GM12878 (cell line): ENCODE measurements at regions of chr16 and their contacts with region 1.

Region 1: DNA sequence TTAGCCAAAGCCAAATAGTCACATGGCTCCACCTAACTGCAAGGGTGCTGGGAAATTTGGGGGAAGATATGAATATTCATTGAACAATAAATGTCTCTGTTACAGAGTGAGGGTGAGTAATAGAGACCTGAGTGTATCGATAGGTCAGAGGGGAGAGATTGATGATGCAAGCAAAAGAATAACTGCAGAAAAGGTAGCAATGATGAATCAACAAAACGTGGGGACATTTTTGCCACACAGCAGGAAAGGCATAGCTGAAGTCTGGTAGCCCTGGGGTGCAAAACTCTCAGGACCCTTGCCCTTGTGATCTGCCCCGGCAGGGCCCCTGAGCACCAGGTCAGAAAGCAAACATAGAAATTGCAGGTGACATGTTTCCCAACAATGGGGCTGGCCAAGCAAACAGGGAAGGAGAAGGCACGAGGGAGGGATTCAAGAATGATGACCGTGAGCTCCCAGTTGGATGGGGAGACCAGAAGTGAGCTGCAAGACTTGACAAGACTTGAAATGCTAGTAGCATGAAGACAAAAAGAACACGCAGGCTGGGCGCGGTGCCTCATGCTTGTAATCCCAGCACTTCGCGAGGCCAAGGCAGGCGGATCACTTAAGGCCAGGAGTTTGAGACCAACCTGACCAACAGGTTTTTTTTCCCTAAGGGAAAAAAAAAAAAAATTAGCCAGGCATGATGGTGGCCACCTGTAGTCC is 12.7 kb upstream of the HERPUD1 start:
- DNase-seq: no peak
- ATAC-seq: no peak
- H3K4me3 ChIP-seq: no peak overlapping the region
- H3K27ac ChIP-seq: no peak overlapping the region
- H3K4me1 ChIP-seq: peaks cover 31% of the 10 kb centered on the region
- H3K27me3 ChIP-seq: no peaks in the 10 kb centered on the region
- CTCF ChIP-seq: no peak
- EP300 ChIP-seq: no peak
- POLR2A ChIP-seq: no peak
- RAD21 ChIP-seq: no peak

Region 2: GRCh38 chr16:56888806-56889205 is 30.4 kb before region 1 on chr16:
- CTCF ChIA-PET with region 1: no interaction called
- POLR2A ChIA-PET with region 1: interaction called, 10 read pairs
- RAD21 ChIA-PET with region 1: interaction called, 3 read pairs
- SMC1A ChIA-PET with region 1: interaction called, 26 read pairs
- in situ Hi-C with region 1: no loop called
- intact Hi-C with region 1: no loop called
- DNase-seq: peak; percentile 61
- ATAC-seq: peak; percentile 94
- H3K4me3 ChIP-seq: no peak overlapping the region
- H3K27ac ChIP-seq: no peak overlapping the region
- H3K4me1 ChIP-seq: peaks cover 8% of the 10 kb centered on the region
- H3K27me3 ChIP-seq: no peaks in the 10 kb centered on the region
- CTCF ChIP-seq: peak in 2 of 3 experiments; percentile 15 to 27; a peak in 2 of 6 replicates
- EP300 ChIP-seq: peak in 1 of 2 experiments; percentile 57; a peak in 1 of 4 replicates
- POLR2A ChIP-seq: no peak
- RAD21 ChIP-seq: 0 out of 2 replicates have a peak, but pooled peaks have one; percentile 37

Region 3: DNA sequence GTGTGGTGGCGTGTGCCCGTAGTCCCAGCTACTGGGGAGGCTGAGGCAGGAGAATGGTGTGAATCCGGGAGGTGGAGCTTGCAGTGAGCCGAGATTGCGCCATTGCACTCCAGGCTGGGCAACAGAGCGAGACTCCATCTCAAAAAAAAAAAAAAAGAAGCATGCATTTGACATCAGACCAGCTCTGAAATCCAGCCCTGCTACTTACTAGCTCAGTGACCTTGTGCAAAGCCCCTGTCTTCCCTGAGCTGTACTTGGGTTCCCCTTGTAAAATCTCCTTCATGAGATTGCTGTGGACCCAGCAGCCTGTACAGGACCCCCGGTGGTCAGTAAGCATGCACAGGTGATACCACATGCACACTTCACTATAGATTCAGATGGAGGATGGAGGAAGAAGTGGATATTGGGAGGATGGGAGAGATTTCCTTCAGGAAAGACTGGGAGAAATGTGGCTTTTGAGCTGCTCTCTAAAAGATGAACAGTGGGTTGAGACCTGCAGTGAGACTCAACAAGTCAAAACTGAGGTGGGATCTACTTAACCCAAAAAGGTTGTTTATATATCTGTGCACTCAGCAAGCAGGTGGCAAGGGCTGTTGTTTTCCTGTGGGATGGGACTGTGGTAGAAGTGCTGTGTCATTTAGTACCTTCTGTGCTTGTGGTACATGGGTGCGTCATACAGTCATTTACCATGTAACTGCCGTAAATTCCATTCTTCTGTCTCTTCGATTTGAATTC is 19.3 kb after region 1 on chr16:
- CTCF ChIA-PET with region 1: interaction called, 7 read pairs
- POLR2A ChIA-PET with region 1: interaction called, 306 read pairs
- RAD21 ChIA-PET with region 1: interaction called, 8 read pairs
- SMC1A ChIA-PET with region 1: interaction called, 18 read pairs
- in situ Hi-C with region 1: no loop called
- intact Hi-C with region 1: no loop called
- DNase-seq: no peak
- ATAC-seq: peak; percentile 45
- H3K4me3 ChIP-seq: peak overlapping the region; percentile 24
- H3K27ac ChIP-seq: peak overlapping the region; percentile 5
- H3K4me1 ChIP-seq: peaks cover 56% of the 10 kb centered on the region
- H3K27me3 ChIP-seq: no peaks in the 10 kb centered on the region
- CTCF ChIP-seq: no peak
- EP300 ChIP-seq: peak; percentile 35 to 55; a peak in 2 of 4 replicates
- POLR2A ChIP-seq: peak; percentile 56
- RAD21 ChIP-seq: no peak

Region 4: DNA sequence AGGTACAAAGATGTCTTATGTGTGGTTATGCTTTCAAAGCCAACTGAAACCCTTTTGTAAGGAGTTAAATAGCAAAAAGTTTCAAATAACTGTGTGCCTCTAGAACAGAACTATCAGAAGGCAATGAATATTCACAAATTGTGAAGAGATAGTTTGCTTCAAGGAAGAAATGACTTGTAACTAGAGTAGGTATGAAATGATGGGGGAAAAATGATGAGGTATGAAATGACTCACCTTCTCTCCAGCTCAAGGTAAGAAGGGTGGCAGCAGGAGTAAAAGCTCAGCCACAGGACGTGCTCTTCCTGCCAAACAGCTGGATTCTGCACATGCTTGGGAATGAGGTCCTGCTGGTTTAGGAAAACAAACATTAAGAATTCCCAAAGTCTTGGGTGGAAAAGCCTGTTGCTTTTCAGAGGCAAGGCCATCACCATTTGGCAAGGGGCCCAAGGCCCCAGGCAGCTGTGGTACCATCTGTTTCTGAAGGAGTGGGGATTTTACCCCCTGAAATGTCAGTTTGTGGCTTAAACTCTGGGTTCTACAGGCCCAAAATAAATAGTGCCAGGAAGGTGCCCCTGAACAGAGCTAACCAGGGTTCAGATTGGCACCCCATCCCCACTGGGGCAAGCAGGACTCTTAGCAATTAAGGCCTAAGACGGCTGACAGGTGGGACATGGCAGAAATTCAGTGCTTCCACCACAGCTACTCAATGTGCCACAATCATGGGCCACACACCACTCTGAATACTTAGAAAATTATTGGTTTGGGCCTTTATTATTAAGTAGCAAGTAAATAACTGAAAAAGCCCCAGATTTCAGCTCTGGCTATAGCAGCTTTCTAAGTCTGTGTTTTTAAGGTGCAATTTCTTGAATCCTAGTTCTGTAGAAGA is 25.9 kb after region 1 on chr16:
- CTCF ChIA-PET with region 1: interaction called, 7 read pairs
- POLR2A ChIA-PET with region 1: interaction called, 306 read pairs
- RAD21 ChIA-PET with region 1: interaction called, 8 read pairs
- SMC1A ChIA-PET with region 1: interaction called, 13 read pairs
- in situ Hi-C with region 1: no loop called
- intact Hi-C with region 1: no loop called
- DNase-seq: peak; percentile 61
- ATAC-seq: peak; percentile 34
- H3K4me3 ChIP-seq: no peak overlapping the region
- H3K27ac ChIP-seq: peak overlapping the region; percentile 40; the same call in 1 of the 2 replicates
- H3K4me1 ChIP-seq: peaks cover 47% of the 10 kb centered on the region
- H3K27me3 ChIP-seq: no peaks in the 10 kb centered on the region
- CTCF ChIP-seq: no peak
- EP300 ChIP-seq: peak in 1 of 2 experiments; percentile 55; a peak in 1 of 4 replicates
- POLR2A ChIP-seq: peak; percentile 76
- RAD21 ChIP-seq: no peak